HEK293 (cell line): ENCODE measurements at regions of chr2 and their contacts with region 1.

Region 1: DNA sequence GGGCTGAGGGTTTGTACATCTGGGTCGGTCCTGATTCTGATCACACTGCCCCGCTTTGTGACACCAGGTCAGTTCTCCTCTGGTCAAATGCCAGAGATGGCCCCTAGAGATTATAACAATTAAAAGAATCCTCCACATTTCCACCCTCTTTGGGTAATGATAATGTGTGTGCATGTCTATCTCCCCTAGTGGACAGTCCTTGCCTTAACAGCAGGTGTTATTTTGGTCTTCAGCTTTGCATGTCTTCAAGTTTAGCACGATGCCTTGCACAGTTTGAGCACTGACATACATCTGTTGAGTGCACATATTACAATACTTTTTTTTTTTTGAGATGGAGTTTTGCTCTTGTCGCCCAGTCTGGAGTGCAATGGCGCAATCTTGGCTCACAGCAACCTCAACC is 25.7 kb upstream of the COX7A2L start:
- H3K4me3 ChIP-seq: no peak overlapping the region
- H3K27ac ChIP-seq: no peak overlapping the region
- H3K4me1 ChIP-seq: no peaks in the 10 kb centered on the region
- CTCF ChIP-seq: no peak

Region 2: DNA sequence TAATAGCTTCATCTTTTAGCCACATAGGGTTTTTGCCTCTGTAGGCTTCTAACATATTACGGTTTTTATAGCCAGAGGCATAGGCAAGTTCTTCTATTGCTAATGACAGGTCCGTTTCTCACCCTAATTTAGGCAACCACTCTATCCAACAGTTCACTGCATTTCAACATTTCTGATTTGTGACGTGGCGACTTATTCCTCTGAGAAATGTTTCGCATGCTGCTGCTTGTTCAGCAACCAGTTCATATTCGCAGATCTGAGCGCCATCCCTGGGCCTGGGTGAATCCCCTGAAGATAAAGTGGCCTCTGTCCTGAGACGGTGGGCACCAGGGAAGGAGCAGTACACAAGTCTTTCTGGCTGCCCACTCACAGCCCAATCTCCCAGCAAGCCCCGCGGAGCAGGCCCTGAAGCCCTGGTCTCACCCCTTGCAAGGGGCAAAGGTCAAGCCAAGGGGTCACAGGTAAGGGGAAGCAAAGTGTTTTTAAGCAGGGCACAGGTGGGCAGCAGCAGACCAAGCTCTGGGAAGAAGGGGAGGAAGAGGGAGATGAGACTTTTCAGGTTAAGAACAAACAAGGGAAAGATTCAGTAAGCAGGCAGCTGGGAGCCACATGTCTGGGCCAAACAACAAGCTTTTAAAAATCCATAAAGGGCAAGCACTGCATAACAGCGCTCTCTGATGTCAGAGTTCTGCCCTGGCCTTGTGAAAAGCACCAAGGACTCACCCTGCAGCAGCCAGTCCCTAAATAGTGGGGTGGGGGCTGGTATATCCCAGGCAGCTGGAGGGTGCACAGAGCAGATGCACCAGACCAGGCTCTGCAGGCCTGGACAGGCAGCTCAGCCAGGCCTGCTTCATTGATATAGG is 14.8 kb before region 1 on chr2:
- CTCF ChIA-PET with region 1: interaction called, 20 read pairs
- POLR2A ChIA-PET with region 1: interaction called, 3 read pairs
- H3K4me3 ChIP-seq: no peak overlapping the region
- H3K27ac ChIP-seq: no peak overlapping the region
- H3K4me1 ChIP-seq: peaks cover 12% of the 10 kb centered on the region
- CTCF ChIP-seq: no peak